CD4-positive, alpha-beta T cell (primary cell): ENCODE measurements at regions of chr14 and their contacts with region 1.

Region 1: DNA sequence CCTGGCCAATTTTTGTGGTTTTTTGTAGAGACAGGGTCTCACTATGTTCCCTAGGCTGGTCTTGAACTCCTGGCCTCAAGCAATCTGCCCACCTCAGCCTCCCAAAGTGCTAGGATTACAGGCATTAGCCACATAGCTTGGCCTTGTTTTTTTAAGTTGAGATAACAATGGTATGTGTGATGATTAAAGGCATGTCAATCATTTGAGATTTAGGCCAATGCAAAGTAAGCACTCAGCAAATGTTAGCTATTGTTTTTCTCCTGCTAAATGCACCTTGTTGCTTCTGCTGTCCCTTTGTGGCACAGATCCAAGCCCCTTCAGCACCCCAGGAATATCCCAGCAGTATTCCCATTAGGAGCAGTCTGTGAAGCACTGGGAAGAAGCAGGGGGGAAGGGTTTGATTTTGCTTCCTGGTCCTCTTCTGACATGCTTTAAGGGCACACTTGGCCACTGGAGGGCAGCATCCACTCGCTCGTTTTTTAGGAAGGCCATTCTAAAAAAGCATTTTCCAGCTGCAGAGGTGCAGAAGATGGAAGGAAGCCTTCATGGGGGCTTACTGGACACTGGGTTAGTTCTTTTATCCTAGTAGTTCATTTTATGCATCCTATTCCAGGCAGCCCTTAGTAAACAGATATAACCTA is 70.2 kb upstream of the ZFP36L1 start:
- DNase-seq: peak; percentile 40 to 75 (median 62)
- ATAC-seq: peak; percentile 32
- H3K4me3 ChIP-seq: no peak overlapping the region
- H3K4me3 Mint-ChIP-seq: no peak overlapping the region
- H3K27ac ChIP-seq: no peak overlapping the region
- H3K27ac Mint-ChIP-seq: no peak overlapping the region
- H3K4me1 ChIP-seq: no peaks in the 10 kb centered on the region
- H3K4me1 Mint-ChIP-seq: no peaks in the 10 kb centered on the region
- H3K27me3 ChIP-seq: no peaks in the 10 kb centered on the region
- H3K27me3 Mint-ChIP-seq: no peaks in the 10 kb centered on the region
- CTCF ChIP-seq: peak; percentile 60

Region 2: GRCh38 chr14:68905107-68905895 is 42.2 kb after region 1 on chr14:
- CTCF ChIA-PET with region 1: no interaction called
- POLR2A ChIA-PET with region 1: no interaction called
- intact Hi-C with region 1: no loop called
- DNase-seq: no peak
- ATAC-seq: no peak
- H3K4me3 ChIP-seq: no peak overlapping the region
- H3K4me3 Mint-ChIP-seq: no peak overlapping the region
- H3K27ac ChIP-seq: no peak overlapping the region
- H3K27ac Mint-ChIP-seq: no peak overlapping the region
- H3K4me1 ChIP-seq: no peaks in the 10 kb centered on the region
- H3K4me1 Mint-ChIP-seq: peaks cover 6% of the 10 kb centered on the region
- H3K27me3 ChIP-seq: no peaks in the 10 kb centered on the region
- H3K27me3 Mint-ChIP-seq: no peaks in the 10 kb centered on the region
- CTCF ChIP-seq: no peak

Region 3: GRCh38 chr14:69090187-69090789 is 227.2 kb after region 1 on chr14:
- CTCF ChIA-PET with region 1: interaction called, 4 read pairs
- POLR2A ChIA-PET with region 1: interaction called, 3 read pairs
- intact Hi-C with region 1: loop called (anchors 5 kb)
- DNase-seq: peak in 12 of 14 experiments; percentile 2 to 64 (median 14)
- ATAC-seq: peak; percentile 79
- H3K4me3 ChIP-seq: no peak overlapping the region
- H3K4me3 Mint-ChIP-seq: no peak overlapping the region
- H3K27ac ChIP-seq: no peak overlapping the region
- H3K27ac Mint-ChIP-seq: no peak overlapping the region
- H3K4me1 ChIP-seq: no peaks in the 10 kb centered on the region
- H3K4me1 Mint-ChIP-seq: peaks cover 10% of the 10 kb centered on the region
- H3K27me3 ChIP-seq: no peaks in the 10 kb centered on the region
- H3K27me3 Mint-ChIP-seq: no peaks in the 10 kb centered on the region
- CTCF ChIP-seq: peak; percentile 66

Region 4: GRCh38 chr14:69107407-69108003 is 244.4 kb after region 1 on chr14:
- CTCF ChIA-PET with region 1: interaction called, 14 read pairs
- POLR2A ChIA-PET with region 1: interaction called, 3 read pairs
- intact Hi-C with region 1: loop called (anchors 1 kb)
- DNase-seq: peak in 7 of 14 experiments; percentile 1 to 69 (median 41)
- ATAC-seq: peak; percentile 60
- H3K4me3 ChIP-seq: no peak overlapping the region
- H3K4me3 Mint-ChIP-seq: no peak overlapping the region
- H3K27ac ChIP-seq: no peak overlapping the region
- H3K27ac Mint-ChIP-seq: peak overlapping the region; percentile 55
- H3K4me1 ChIP-seq: no peaks in the 10 kb centered on the region
- H3K4me1 Mint-ChIP-seq: peaks cover 13% of the 10 kb centered on the region
- H3K27me3 ChIP-seq: no peaks in the 10 kb centered on the region
- H3K27me3 Mint-ChIP-seq: no peaks in the 10 kb centered on the region
- CTCF ChIP-seq: peak; percentile 61

Region 5: GRCh38 chr14:69460093-69460701 is 597.1 kb after region 1 on chr14:
- CTCF ChIA-PET with region 1: no interaction called
- POLR2A ChIA-PET with region 1: no interaction called
- intact Hi-C with region 1: loop called (anchors 5 kb)
- DNase-seq: peak in 13 of 14 experiments; percentile 4 to 77 (median 29)
- ATAC-seq: peak; percentile 81
- H3K4me3 ChIP-seq: no peak overlapping the region
- H3K4me3 Mint-ChIP-seq: no peak overlapping the region
- H3K27ac ChIP-seq: no peak overlapping the region
- H3K27ac Mint-ChIP-seq: no peak overlapping the region
- H3K4me1 ChIP-seq: no peaks in the 10 kb centered on the region
- H3K4me1 Mint-ChIP-seq: no peaks in the 10 kb centered on the region
- H3K27me3 ChIP-seq: no peaks in the 10 kb centered on the region
- H3K27me3 Mint-ChIP-seq: no peaks in the 10 kb centered on the region
- CTCF ChIP-seq: peak; percentile 80

Region 6: GRCh38 chr14:69574263-69574953 is 711.3 kb after region 1 on chr14 and contains the start of gene CCDC177:
- CTCF ChIA-PET with region 1: no interaction called
- POLR2A ChIA-PET with region 1: no interaction called
- intact Hi-C with region 1: loop called (anchors 2 to 10 kb)
- DNase-seq: peak; percentile 56 to 83 (median 68)
- ATAC-seq: peak; percentile 87
- H3K4me3 ChIP-seq: peak within 1 kb of the TSS; percentile 55
- H3K4me3 Mint-ChIP-seq: peak within 1 kb of the TSS; percentile 83
- H3K27ac ChIP-seq: no peak within 1 kb of the TSS
- H3K27ac Mint-ChIP-seq: no peak within 1 kb of the TSS
- H3K4me1 ChIP-seq: peaks cover 29% of the 10 kb centered on the region
- H3K4me1 Mint-ChIP-seq: peaks cover 11% of the 10 kb centered on the region
- H3K27me3 ChIP-seq: peaks cover 36 to 49% of the 10 kb centered on the region in 2 experiments
- H3K27me3 Mint-ChIP-seq: peaks cover 61% of the 10 kb centered on the region
- CTCF ChIP-seq: peak; percentile 97
- total RNA-seq, gene CCDC177: not detected